ENCODE measurements at regions of chr6 and their contacts with region 1.

Region 1: GRCh38 chr6:117449549-117450439 is 24.1 kb upstream of the ROS1 start:
- DNase-seq: peak; percentile 40 to 70
- H3K4me3 ChIP-seq: no peak overlapping the region
- H3K27ac ChIP-seq: peak overlapping the region; percentile 49; the same call in 1 of the 2 replicates
- H3K4me1 ChIP-seq: peaks cover 41% of the 10 kb centered on the region
- H3K27me3 ChIP-seq: no peaks in the 10 kb centered on the region
- CTCF ChIP-seq: peak; percentile 95

Region 2: DNA sequence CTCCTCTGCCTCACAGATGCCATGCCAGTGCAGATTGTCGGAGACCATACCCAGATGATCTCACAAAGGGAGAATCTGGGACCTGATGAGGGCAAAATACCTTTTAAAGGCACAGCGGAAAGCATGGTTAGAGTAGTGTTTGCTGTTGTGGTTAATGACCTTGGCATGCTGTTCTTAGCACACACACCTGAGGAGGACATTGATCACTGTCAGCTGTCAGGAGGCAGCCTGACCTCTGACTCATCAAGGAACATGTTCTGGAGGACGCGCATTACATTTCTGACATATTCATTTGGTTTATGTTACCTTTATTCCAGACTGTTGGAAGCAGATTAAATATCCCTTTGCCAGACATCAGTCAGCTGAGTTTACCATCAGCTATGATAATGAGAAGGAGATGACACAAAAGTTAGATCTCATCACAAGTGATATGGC is 95.4 kb after region 1 on chr6:
- CTCF ChIA-PET with region 1: no interaction called
- POLR2A ChIA-PET with region 1: no interaction called
- intact Hi-C with region 1: loop called (anchors 1 kb)
- DNase-seq: peak; percentile 60 to 99
- H3K4me3 ChIP-seq: no peak overlapping the region
- H3K27ac ChIP-seq: peak overlapping the region; percentile 40
- H3K4me1 ChIP-seq: peaks cover 79% of the 10 kb centered on the region
- H3K27me3 ChIP-seq: no peaks in the 10 kb centered on the region
- CTCF ChIP-seq: no peak

Region 3: DNA sequence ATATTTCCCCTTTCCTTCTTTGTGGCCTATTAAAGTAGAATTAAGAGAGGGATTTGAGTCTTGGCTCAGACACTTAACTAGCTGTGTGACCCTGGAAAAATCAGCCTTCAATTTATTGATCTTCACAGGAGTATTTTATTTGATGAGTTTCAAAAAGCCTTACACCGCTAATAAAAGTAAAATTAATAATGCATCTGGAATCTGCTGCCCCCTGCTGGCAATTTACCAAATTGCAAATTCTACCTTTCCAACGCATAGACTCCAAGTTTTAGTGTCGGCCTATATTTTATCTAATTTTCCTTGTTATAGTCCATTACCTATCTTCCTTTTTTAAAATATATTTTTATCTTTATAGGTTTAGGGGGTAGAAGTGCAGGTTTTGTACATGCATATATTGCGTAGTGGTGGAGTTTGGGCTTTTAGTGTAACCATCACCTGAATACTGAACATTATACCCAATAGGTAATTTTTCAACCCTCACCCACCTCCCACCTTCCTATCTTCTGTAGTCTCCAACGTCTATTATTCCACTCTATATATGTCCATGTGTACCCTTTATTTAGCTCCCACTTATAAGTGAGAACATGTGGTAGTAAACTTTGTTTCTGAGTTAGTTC is 106.2 kb after region 1 on chr6:
- CTCF ChIA-PET with region 1: interaction called, 8 read pairs
- POLR2A ChIA-PET with region 1: no interaction called
- intact Hi-C with region 1: loop called (anchors 1 kb)
- DNase-seq: peak in 1 of 2 experiments; percentile 41
- H3K4me3 ChIP-seq: no peak overlapping the region
- H3K27ac ChIP-seq: no peak overlapping the region
- H3K4me1 ChIP-seq: peaks cover 10% of the 10 kb centered on the region
- H3K27me3 ChIP-seq: no peaks in the 10 kb centered on the region
- CTCF ChIP-seq: peak; percentile 97

Region 4: DNA sequence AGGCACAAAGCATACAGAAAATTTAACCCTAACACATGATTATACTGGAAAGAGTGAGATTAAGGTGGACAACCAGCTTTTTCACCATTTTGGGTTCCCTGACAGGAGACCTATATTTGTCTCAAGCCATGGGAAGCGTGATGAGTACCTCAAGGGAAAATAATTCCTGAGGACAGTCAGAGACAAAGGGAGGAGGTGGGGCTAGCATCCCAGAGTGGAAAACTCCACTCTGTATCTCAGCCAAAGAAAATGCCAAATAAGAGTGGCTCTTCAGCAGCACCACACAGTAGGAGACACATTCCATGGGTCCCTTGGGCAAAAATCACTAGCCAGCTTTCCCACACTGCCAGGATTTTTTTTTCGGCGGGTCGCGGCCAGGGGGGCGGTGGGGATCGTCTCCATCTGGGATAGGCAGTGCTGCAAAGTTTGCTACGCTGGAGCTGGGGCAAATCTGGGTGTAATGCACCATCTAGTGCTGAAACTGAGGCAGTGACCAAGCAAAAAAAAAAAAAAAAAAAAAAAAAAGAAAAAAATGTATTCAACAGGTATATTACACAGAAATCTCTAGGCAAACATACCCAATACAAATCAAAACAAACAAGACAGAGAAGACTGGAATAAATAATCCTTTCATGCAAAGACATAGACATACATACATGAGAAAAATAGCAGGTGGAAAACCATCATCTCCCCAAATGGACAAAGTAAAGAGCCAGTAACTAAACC is 380.0 kb after region 1 on chr6:
- CTCF ChIA-PET with region 1: no interaction called
- POLR2A ChIA-PET with region 1: no interaction called
- intact Hi-C with region 1: loop called (anchors 5 kb)
- DNase-seq: peak in 1 of 2 experiments; percentile 7
- H3K4me3 ChIP-seq: peak overlapping the region; percentile 48; the same call in 1 of the 2 replicates
- H3K27ac ChIP-seq: no peak overlapping the region
- H3K4me1 ChIP-seq: no peaks in the 10 kb centered on the region
- H3K27me3 ChIP-seq: no peaks in the 10 kb centered on the region
- CTCF ChIP-seq: peak; percentile 75

Region 5: DNA sequence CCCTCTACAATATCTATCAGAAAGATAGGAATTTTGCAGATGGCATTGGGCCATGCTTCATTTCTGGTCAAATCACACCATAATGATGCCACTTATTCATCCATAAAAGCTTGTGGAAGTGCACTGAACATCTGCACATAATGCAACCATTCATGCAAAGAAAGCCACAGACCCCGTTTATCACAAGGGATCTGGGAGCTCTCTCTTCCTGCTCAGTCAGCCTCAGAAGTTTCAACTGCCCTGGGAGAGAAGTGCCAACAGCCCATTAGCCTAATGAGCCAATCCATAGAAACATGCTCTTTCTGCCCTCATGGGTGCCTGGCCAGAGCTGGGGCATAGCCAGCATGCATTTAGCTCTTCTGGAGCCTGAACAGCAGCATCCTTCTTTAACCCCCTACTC is 543.1 kb after region 1 on chr6:
- CTCF ChIA-PET with region 1: no interaction called
- POLR2A ChIA-PET with region 1: no interaction called
- intact Hi-C with region 1: no loop called
- DNase-seq: no peak
- H3K4me3 ChIP-seq: no peak overlapping the region
- H3K27ac ChIP-seq: no peak overlapping the region
- H3K4me1 ChIP-seq: no peaks in the 10 kb centered on the region
- H3K27me3 ChIP-seq: no peaks in the 10 kb centered on the region
- CTCF ChIP-seq: no peak

Region 6: DNA sequence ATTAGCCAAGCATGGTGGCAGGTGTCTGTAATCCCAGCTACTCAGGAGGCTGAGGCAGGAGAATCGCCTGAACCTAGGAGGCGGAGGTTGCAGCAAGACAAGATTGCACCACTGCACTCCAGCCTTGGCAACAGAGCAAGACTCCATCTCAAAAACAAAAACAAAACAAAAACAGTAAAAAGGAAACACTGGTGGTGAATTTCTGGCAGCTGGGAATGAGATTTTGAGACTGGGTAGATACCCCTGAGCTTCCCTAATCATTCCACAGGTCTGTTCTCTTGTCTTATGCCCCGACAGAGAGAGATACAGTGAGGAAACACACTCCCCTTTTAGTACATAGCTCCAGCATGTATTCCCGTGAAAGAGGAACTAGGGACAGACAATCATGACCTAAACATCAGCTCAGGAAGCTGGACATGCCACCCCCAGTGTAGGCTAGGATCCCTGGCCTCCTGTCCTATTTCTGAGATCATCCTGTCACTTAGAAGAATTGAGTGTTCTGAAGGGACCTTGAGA is 1890.2 kb after region 1 on chr6:
- CTCF ChIA-PET with region 1: no interaction called
- POLR2A ChIA-PET with region 1: interaction called, 10 read pairs
- intact Hi-C with region 1: no loop called
- DNase-seq: no peak
- H3K4me3 ChIP-seq: no peak overlapping the region
- H3K27ac ChIP-seq: no peak overlapping the region
- H3K4me1 ChIP-seq: no peaks in the 10 kb centered on the region
- H3K27me3 ChIP-seq: no peaks in the 10 kb centered on the region
- CTCF ChIP-seq: no peak